GM12878 (cell line): ENCODE measurements at regions of chr11 and their contacts with region 1.

Region 1: DNA sequence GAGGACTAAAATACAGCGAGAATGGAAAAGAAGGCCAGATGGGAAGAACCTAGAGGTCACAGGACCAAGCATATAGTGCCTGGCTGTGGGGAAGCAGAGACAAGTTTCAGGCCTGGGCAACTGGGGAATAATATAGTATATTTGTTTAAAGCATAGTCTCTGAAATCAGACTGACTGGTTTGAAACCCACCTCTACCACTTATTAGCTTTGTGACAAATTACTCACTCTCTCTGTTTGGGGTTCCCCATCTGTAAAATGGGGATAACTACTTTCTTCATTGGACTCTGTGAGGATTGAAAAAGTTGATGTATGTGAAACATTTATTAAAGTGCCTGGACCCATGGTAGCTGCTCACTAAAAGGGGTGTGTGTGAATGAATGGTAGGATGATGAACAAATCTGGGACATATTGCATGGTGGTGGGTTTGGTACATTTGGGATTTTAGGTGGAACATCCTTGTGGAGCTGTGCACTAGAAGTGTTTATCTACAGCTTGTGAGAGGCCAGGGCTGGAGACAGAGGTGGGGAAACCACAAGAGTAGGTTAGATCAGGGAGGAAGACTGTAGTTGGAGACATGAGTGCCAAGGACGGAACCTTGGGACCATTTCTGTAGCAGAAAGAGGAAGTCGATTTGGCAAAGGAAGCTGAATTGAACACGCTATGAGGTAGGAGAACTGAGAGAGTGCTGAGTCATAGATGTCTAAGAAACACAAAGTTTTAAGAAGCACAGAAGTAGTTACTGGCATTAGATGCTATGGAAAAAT is 52.6 kb downstream of the SWAP70 start:
- DNase-seq: peak; percentile 92
- ATAC-seq: peak; percentile 90
- H3K4me3 ChIP-seq: no peak overlapping the region
- H3K27ac ChIP-seq: peak overlapping the region; percentile 65
- H3K4me1 ChIP-seq: peaks cover 58% of the 10 kb centered on the region
- H3K27me3 ChIP-seq: no peaks in the 10 kb centered on the region
- CTCF ChIP-seq: no peak
- EP300 ChIP-seq: peak in 1 of 2 experiments; percentile 87; a peak in 1 of 4 replicates
- POLR2A ChIP-seq: no peak
- RAD21 ChIP-seq: no peak

Region 2: DNA sequence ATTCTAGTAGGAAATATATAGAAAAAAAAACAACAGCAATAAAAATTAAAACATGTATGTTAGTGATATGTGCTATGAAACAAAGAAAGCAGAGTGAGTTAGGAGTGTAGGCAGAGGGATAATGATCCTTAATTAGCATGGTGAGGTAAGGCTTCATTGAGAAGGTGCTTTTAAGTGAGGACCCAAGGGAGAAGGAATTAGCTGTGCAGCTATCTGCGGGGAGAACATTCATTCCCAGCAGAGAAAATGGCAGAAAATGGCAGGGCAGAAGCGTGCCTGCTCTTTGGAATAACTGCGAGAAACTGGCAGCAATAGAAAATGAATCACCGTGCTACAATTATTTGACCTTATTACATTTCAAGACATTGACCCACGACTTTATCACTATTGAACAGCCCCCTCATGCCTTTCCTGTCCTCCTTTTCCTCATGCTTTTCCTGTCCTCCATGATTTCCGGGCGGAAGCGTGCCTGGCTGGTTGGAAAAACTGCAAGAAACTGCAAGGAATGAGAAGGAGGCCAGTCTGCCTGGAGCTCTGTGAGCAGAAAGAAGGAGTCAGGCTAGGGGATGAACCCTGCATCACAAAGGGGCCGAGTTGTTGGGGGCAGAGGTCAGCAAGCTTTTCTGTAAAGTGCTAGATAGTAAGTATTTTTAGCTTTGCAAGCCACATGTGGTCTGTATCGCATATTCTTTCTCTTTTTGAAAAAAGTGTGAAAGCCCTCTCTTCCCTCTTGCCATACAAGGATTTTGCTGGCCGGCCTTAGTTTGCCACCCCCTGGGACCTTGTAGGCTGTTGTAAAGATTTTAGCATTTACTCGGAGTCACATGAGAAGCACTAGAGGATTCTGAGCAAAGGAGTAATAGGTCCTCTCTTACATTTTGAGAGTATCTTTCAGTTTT is 89.7 kb before region 1 on chr11:
- CTCF ChIA-PET with region 1: interaction called, 4 read pairs
- POLR2A ChIA-PET with region 1: no interaction called
- RAD21 ChIA-PET with region 1: interaction called, 4 read pairs
- SMC1A ChIA-PET with region 1: interaction called, 13 read pairs
- in situ Hi-C with region 1: no loop called
- intact Hi-C with region 1: no loop called
- DNase-seq: no peak
- ATAC-seq: peak; percentile 73
- H3K4me3 ChIP-seq: no peak overlapping the region
- H3K27ac ChIP-seq: no peak overlapping the region
- H3K4me1 ChIP-seq: peaks cover 36% of the 10 kb centered on the region
- H3K27me3 ChIP-seq: no peaks in the 10 kb centered on the region
- CTCF ChIP-seq: no peak
- EP300 ChIP-seq: 0 out of 4 replicates have a peak, but pooled peaks of 1 of the 2 experiments have one; percentile 19
- POLR2A ChIP-seq: no peak
- RAD21 ChIP-seq: no peak

Region 3: DNA sequence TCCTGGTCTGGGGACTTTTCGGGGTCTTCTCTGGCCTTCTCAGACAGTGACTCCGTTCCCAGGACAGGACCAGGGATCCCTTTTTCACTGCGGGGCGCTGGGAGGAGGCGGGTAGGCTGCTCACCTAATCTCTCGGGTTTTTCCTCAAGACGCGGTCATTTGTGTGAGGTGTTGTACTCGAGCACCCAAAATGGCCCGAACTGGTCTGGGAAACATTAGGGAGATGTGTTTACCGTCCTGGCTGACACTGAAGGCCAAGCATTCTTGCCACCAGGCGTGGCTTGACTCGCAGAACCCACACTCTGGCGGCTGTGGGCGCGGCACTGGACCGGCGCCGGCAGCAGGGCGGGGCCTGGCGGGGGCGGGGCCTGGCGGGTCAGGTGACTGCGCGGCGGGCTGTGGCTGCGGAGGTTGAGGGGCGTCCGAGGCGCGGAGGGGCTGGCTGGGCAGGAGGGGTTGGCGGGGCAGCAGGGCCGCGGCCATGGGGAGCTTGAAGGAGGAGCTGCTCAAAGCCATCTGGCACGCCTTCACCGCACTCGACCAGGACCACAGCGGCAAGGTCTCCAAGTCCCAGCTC is 52.7 kb before region 1 on chr11 and contains the start of gene SWAP70:
- CTCF ChIA-PET with region 1: no interaction called
- POLR2A ChIA-PET with region 1: no interaction called
- RAD21 ChIA-PET with region 1: interaction called, 7 read pairs
- SMC1A ChIA-PET with region 1: interaction called, 3 read pairs
- in situ Hi-C with region 1: no loop called
- intact Hi-C with region 1: loop called (anchors 5 kb)
- DNase-seq: no peak
- ATAC-seq: peak; percentile 88
- H3K4me3 ChIP-seq: peak within 1 kb of the TSS; percentile 97
- H3K27ac ChIP-seq: peak within 1 kb of the TSS; percentile 86
- H3K4me1 ChIP-seq: peaks cover 26% of the 10 kb centered on the region
- H3K27me3 ChIP-seq: no peaks in the 10 kb centered on the region
- CTCF ChIP-seq: no peak
- EP300 ChIP-seq: no peak
- POLR2A ChIP-seq: peak; percentile 88
- RAD21 ChIP-seq: no peak
- polyA plus RNA-seq, gene SWAP70: 28.7 to 30.9 TPM

Region 4: GRCh38 chr11:9688716-9689511 is 27.5 kb before region 1 on chr11:
- CTCF ChIA-PET with region 1: interaction called, 4 read pairs
- POLR2A ChIA-PET with region 1: interaction called, 3 read pairs
- RAD21 ChIA-PET with region 1: interaction called, 4 read pairs
- SMC1A ChIA-PET with region 1: interaction called, 13 read pairs
- in situ Hi-C with region 1: no loop called
- intact Hi-C with region 1: no loop called
- DNase-seq: peak; percentile 81
- ATAC-seq: peak; percentile 92
- H3K4me3 ChIP-seq: peak overlapping the region; percentile 51
- H3K27ac ChIP-seq: peak overlapping the region; percentile 81
- H3K4me1 ChIP-seq: peaks cover 54% of the 10 kb centered on the region
- H3K27me3 ChIP-seq: no peaks in the 10 kb centered on the region
- CTCF ChIP-seq: no peak
- EP300 ChIP-seq: no peak; a peak in 1 of 4 replicates
- POLR2A ChIP-seq: no peak
- RAD21 ChIP-seq: 0 out of 2 replicates have a peak, but pooled peaks have one; percentile 13

Region 5: GRCh38 chr11:9726321-9727022 is 10.0 kb after region 1 on chr11:
- CTCF ChIA-PET with region 1: interaction called, 5 read pairs
- POLR2A ChIA-PET with region 1: interaction called, 5 read pairs
- RAD21 ChIA-PET with region 1: interaction called, 3 read pairs
- SMC1A ChIA-PET with region 1: interaction called, 10 read pairs
- in situ Hi-C with region 1: no loop called
- intact Hi-C with region 1: no loop called
- DNase-seq: no peak
- ATAC-seq: peak; percentile 67
- H3K4me3 ChIP-seq: no peak overlapping the region
- H3K27ac ChIP-seq: no peak overlapping the region; the same call in 1 of the 2 replicates
- H3K4me1 ChIP-seq: peaks cover 30% of the 10 kb centered on the region
- H3K27me3 ChIP-seq: no peaks in the 10 kb centered on the region
- CTCF ChIP-seq: no peak
- EP300 ChIP-seq: no peak
- POLR2A ChIP-seq: no peak
- RAD21 ChIP-seq: no peak

Region 6: GRCh38 chr11:9815486-9816136 is 99.2 kb after region 1 on chr11:
- CTCF ChIA-PET with region 1: no interaction called
- POLR2A ChIA-PET with region 1: no interaction called
- RAD21 ChIA-PET with region 1: no interaction called
- SMC1A ChIA-PET with region 1: no interaction called
- in situ Hi-C with region 1: no loop called
- intact Hi-C with region 1: no loop called
- DNase-seq: no peak
- ATAC-seq: no peak
- H3K4me3 ChIP-seq: no peak overlapping the region
- H3K27ac ChIP-seq: no peak overlapping the region
- H3K4me1 ChIP-seq: no peaks in the 10 kb centered on the region
- H3K27me3 ChIP-seq: no peaks in the 10 kb centered on the region
- CTCF ChIP-seq: no peak
- EP300 ChIP-seq: no peak
- POLR2A ChIP-seq: no peak
- RAD21 ChIP-seq: no peak